SK-N-SH (cell line): ENCODE measurements at regions of chr11 and their contacts with region 1.

Region 1: DNA sequence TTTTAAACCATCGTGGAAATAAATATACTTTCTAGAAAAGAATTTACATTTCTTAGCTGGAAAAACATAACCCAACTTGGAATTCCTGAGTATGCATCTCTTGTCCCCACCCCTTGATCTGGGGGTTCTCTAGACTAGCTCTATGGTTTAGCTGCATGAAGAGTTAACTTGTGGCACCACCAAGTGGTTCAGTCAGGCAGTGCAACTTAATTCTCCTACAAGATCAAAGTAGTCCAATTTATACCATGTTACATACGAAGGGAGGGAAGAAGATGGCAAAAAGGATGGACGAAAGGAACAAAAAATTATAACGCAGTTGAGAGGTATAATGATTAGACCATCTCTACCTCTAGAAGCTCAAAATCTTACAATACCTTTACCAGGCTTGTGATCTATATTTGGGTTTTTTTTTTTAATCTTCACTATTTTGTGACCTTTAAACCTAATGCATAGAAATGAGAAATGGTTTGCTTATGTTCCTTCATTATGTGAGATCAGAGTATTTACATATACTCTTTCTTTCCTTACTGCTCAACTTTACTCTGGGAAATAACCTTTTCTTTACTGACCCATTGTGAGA is 28.5 kb upstream of the ALKBH3 start:
- DNase-seq: peak; percentile 73
- H3K4me3 ChIP-seq: no peak overlapping the region
- H3K27ac ChIP-seq: no peak overlapping the region
- H3K4me1 ChIP-seq: no peaks in the 10 kb centered on the region
- H3K27me3 ChIP-seq: no peaks in the 10 kb centered on the region
- CTCF ChIP-seq: peak; percentile 97
- EP300 ChIP-seq: no peak
- RAD21 ChIP-seq: peak; percentile 96

Region 2: GRCh38 chr11:43504316-43504950 is 347.7 kb before region 1 on chr11:
- CTCF ChIA-PET with region 1: interaction called, 18 read pairs
- POLR2A ChIA-PET with region 1: no interaction called
- DNase-seq: peak; percentile 31
- H3K4me3 ChIP-seq: no peak overlapping the region
- H3K27ac ChIP-seq: no peak overlapping the region
- H3K4me1 ChIP-seq: peaks cover 4 to 8% of the 10 kb centered on the region in 2 experiments; a peak in 2 of 4 replicates
- H3K27me3 ChIP-seq: no peaks in the 10 kb centered on the region
- CTCF ChIP-seq: peak; percentile 39
- EP300 ChIP-seq: no peak
- RAD21 ChIP-seq: peak; percentile 67

Region 3: DNA sequence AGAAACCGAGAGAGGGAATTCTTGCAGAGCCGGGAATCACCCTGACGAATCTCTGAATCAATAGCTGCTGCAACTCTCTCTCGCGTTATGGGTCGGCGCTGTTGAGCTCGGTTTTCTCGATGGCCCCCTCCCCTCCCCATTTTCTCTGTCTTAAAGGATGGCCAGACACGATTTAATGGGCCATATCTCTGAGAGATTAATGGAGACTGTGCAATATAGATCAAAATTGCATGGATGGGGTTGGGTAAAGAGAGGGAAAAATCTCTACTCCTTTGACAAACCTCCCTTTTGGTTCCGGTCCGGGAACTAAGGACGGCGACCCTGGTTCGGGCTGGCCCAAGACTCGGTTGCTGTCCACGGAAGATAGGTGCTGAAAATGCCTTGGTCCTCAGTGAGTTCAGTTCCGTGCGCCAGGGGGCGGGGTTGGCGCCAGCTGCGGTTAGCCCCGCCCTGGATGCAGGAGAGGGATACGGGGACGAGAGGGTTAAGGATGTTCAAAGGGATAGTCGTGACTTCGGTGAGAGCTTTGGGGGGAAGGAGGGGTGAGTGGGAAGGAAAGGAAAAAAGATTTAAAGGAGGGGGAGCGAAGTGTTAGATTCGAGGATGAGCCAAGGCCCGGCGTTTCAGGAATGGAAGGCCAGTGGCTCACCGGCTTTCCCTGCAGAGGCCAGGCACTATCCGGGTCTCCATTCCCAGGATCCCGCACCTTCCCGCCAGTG is 275.2 kb before region 1 on chr11:
- CTCF ChIA-PET with region 1: interaction called, 25 read pairs
- POLR2A ChIA-PET with region 1: no interaction called
- DNase-seq: peak; percentile 71
- H3K4me3 ChIP-seq: peak overlapping the region; percentile 41 to 61; a peak in 3 of 4 replicates
- H3K27ac ChIP-seq: no peak overlapping the region
- H3K4me1 ChIP-seq: peaks cover 21 to 42% of the 10 kb centered on the region in 2 experiments; a peak in 3 of 4 replicates
- H3K27me3 ChIP-seq: peaks cover 81% of the 10 kb centered on the region
- CTCF ChIP-seq: peak; percentile 39
- EP300 ChIP-seq: no peak
- RAD21 ChIP-seq: no peak

Region 4: GRCh38 chr11:43619863-43620505 is 232.2 kb before region 1 on chr11:
- CTCF ChIA-PET with region 1: no interaction called
- POLR2A ChIA-PET with region 1: no interaction called
- DNase-seq: no peak
- H3K4me3 ChIP-seq: no peak overlapping the region
- H3K27ac ChIP-seq: no peak overlapping the region
- H3K4me1 ChIP-seq: no peaks in the 10 kb centered on the region
- H3K27me3 ChIP-seq: no peaks in the 10 kb centered on the region
- CTCF ChIP-seq: no peak
- EP300 ChIP-seq: no peak
- RAD21 ChIP-seq: no peak

Region 5: DNA sequence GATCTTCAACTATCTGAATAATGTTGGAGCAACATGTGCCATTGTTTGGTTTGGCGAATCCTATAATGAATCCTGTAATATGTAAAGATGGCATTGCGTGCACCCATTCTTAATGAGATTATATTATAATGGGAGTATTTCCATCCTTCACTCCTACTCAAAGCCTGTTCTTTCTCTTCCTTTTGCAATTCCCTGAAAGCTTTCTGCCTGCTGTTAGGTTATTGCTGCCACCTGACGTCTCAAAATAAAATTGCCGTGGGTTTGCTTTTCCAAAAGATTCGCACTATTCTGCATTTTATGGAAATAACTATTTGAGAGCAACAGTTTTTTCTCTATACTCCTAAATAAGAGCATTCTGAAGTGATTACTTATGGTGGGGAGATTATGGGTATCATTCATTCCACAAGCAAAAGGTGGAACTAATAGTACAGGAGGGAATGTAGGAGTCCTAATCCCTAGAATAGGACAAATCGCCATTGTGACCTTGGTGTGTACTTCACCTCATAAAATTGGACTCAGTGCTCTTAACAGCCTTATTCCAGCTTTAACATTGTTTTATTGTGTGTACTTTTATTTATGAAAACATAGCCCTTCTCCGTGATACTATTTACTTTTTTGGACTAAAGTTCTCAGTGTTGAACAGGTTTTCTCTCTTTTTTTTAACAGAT is 41.1 kb before region 1 on chr11:
- CTCF ChIA-PET with region 1: interaction called, 10 read pairs
- POLR2A ChIA-PET with region 1: no interaction called
- DNase-seq: no peak
- H3K4me3 ChIP-seq: no peak overlapping the region
- H3K27ac ChIP-seq: no peak overlapping the region
- H3K4me1 ChIP-seq: peaks cover 3 to 8% of the 10 kb centered on the region in 2 experiments; a peak in 3 of 4 replicates
- H3K27me3 ChIP-seq: no peaks in the 10 kb centered on the region
- CTCF ChIP-seq: peak; percentile 65
- EP300 ChIP-seq: no peak
- RAD21 ChIP-seq: peak; percentile 80

Region 6: GRCh38 chr11:43825217-43825816 is 26.8 kb before region 1 on chr11:
- CTCF ChIA-PET with region 1: interaction called, 337 read pairs
- POLR2A ChIA-PET with region 1: interaction called, 3 read pairs
- DNase-seq: peak; percentile 46
- H3K4me3 ChIP-seq: no peak overlapping the region; a peak in 1 of 4 replicates
- H3K27ac ChIP-seq: no peak overlapping the region
- H3K4me1 ChIP-seq: peaks cover 0 to 5% of the 10 kb centered on the region in 2 experiments; a peak in 1 of 4 replicates
- H3K27me3 ChIP-seq: no peaks in the 10 kb centered on the region
- CTCF ChIP-seq: peak; percentile 97
- EP300 ChIP-seq: no peak
- RAD21 ChIP-seq: peak; percentile 76

Region 7: DNA sequence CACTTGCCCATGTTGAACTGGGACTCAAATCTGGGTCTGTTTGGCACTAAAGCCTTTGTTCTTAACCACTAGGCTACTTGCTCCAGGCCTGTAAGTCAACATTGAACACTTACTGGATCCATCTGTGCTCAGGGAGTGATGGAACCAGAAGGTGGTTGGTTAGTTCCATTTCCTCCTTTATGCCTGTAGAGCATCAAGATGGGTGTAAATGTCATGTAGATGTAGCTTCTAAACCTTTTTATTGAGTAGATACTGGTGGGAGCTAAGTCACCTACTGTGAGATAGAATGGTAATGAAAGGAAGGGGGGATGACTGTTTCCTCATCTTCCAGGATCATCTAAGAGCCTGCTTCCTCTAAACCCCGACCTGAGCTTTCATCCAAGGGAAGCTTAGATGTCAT is 10.1 kb before region 1 on chr11:
- CTCF ChIA-PET with region 1: interaction called, 337 read pairs
- POLR2A ChIA-PET with region 1: no interaction called
- DNase-seq: no peak
- H3K4me3 ChIP-seq: no peak overlapping the region
- H3K27ac ChIP-seq: no peak overlapping the region
- H3K4me1 ChIP-seq: peaks cover 0 to 12% of the 10 kb centered on the region in 2 experiments; a peak in 3 of 4 replicates
- H3K27me3 ChIP-seq: no peaks in the 10 kb centered on the region
- CTCF ChIP-seq: no peak
- EP300 ChIP-seq: no peak
- RAD21 ChIP-seq: no peak

Region 8: DNA sequence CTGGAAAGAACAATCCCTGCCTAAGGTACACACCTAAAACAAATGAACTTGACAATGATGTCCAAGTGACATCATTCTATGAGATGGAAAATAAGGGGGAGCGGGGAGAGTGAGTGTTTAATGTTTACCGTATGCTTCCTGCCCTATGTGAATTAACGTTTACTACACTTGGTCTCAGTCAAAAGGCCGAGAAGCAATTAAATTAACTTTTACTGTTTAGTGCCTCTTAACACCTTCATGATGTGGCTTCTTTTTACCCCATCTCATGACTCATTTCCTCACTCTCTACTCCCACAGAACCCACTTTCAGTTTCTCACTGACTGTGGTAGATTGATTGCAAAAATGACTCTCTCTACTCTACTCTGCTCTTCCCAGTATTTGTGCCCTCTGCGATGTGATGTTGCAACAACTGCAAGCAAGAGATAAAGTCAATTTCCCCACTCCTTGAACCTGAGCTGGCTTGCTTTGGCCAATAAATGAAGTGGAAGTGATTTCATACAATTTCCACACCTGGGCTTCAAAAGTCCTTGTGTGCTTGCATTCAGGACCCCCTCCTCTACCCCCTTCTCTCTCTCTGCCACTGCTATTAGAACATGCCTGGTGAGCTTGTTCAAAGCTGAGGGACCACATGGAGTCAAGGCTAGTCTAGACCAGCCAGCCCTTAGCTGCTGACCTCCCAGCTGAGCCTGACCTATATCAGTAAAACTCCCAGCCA is 16.9 kb after region 1 on chr11:
- CTCF ChIA-PET with region 1: interaction called, 22 read pairs
- POLR2A ChIA-PET with region 1: no interaction called
- DNase-seq: no peak
- H3K4me3 ChIP-seq: no peak overlapping the region
- H3K27ac ChIP-seq: no peak overlapping the region
- H3K4me1 ChIP-seq: no peaks in the 10 kb centered on the region
- H3K27me3 ChIP-seq: no peaks in the 10 kb centered on the region
- CTCF ChIP-seq: no peak
- EP300 ChIP-seq: no peak
- RAD21 ChIP-seq: no peak

Region 9: GRCh38 chr11:44277196-44278090 is 425.3 kb after region 1 on chr11:
- CTCF ChIA-PET with region 1: no interaction called
- POLR2A ChIA-PET with region 1: no interaction called
- DNase-seq: no peak
- H3K4me3 ChIP-seq: no peak overlapping the region
- H3K27ac ChIP-seq: no peak overlapping the region
- H3K4me1 ChIP-seq: peaks cover 0 to 10% of the 10 kb centered on the region in 2 experiments; a peak in 1 of 4 replicates
- H3K27me3 ChIP-seq: no peaks in the 10 kb centered on the region
- CTCF ChIP-seq: no peak
- EP300 ChIP-seq: no peak
- RAD21 ChIP-seq: no peak